ENCODE measurements at regions of chr9 and their contacts with region 1.

Region 1: DNA sequence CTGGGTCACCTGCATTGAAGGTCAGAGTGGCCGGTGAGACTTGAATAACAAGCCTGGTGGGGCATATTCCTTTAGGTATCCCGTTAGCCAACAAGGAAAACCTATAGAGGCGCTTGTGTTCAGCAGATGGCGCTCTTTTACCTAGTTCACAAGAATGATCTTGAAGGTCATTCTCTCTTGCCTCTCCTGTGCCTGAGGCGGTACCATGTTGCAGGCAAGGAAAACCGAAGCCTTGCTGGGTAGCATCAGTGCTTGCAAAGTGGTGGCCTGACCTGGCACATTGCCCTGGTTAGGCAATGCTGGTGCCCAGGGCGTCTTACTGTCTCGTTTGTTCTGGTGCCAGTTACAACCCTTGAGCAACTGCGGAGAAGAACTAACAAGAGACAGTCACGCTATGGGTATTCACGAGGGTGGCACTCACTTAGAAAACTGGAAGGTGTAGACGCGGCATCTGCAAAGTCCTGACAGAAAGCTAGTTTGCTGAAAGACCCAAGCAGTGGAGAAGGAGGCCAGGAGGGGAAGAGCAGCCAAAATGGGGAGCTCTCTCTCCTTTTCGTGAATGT is 56.7 kb downstream of the AOPEP start:
- DNase-seq: peak; percentile 98 to 99
- H3K4me3 ChIP-seq: no peak overlapping the region
- H3K27ac ChIP-seq: peak overlapping the region; percentile 78
- H3K4me1 ChIP-seq: peaks cover 30% of the 10 kb centered on the region
- H3K27me3 ChIP-seq: no peaks in the 10 kb centered on the region
- CTCF ChIP-seq: peak; percentile 84

Region 2: GRCh38 chr9:94554439-94555391 is 228.5 kb before region 1 on chr9 and contains the start of gene PCAT7:
- CTCF ChIA-PET with region 1: no interaction called
- POLR2A ChIA-PET with region 1: interaction called, 4 read pairs
- intact Hi-C with region 1: loop called (anchors 1 kb)
- DNase-seq: peak; percentile 78 to 87
- H3K4me3 ChIP-seq: peak within 1 kb of the TSS; percentile 67
- H3K27ac ChIP-seq: peak within 1 kb of the TSS; percentile 82
- H3K4me1 ChIP-seq: peaks cover 5% of the 10 kb centered on the region
- H3K27me3 ChIP-seq: no peaks in the 10 kb centered on the region
- CTCF ChIP-seq: peak; percentile 82
- total RNA-seq, gene PCAT7: 3.8 and 3.9 TPM in 2 replicates

Region 3: DNA sequence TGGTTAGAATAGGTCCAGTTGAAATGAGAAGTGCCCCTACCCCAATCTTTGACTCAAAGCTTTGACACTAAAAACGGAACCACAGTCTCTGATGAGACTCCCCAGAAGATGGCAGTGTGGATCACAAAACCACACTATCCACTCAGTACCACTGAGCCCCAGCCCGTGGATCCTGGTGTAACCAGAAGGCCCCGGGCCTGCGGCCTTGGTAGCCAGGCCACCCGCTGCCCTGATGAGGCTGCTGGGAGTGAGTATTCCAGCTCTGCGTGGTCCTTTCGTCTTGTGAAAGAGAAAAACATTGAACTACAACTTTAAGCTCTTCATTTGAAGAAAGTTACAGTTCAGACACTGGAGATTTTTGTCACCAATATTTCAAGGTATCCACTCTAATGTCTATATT is 101.7 kb before region 1 on chr9:
- CTCF ChIA-PET with region 1: interaction called, 7 read pairs
- POLR2A ChIA-PET with region 1: no interaction called
- intact Hi-C with region 1: loop called (anchors 1 kb)
- DNase-seq: peak; percentile 51 to 59
- H3K4me3 ChIP-seq: no peak overlapping the region
- H3K27ac ChIP-seq: no peak overlapping the region
- H3K4me1 ChIP-seq: 0 out of 2 replicates have a peak, but pooled peaks cover 6% of the 10 kb centered on the region
- H3K27me3 ChIP-seq: no peaks in the 10 kb centered on the region
- CTCF ChIP-seq: peak; percentile 74

Region 4: GRCh38 chr9:94697972-94698581 is 85.1 kb before region 1 on chr9:
- CTCF ChIA-PET with region 1: no interaction called
- POLR2A ChIA-PET with region 1: no interaction called
- intact Hi-C with region 1: no loop called
- DNase-seq: peak in 1 of 2 experiments; percentile 57
- H3K4me3 ChIP-seq: no peak overlapping the region
- H3K27ac ChIP-seq: no peak overlapping the region
- H3K4me1 ChIP-seq: no peaks in the 10 kb centered on the region; the same call in 1 of the 2 replicates
- H3K27me3 ChIP-seq: no peaks in the 10 kb centered on the region
- CTCF ChIP-seq: no peak

Region 5: GRCh38 chr9:94821098-94821887 is 38.1 kb after region 1 on chr9:
- CTCF ChIA-PET with region 1: no interaction called
- POLR2A ChIA-PET with region 1: no interaction called
- intact Hi-C with region 1: loop called (anchors 1 kb)
- DNase-seq: no peak
- H3K4me3 ChIP-seq: no peak overlapping the region
- H3K27ac ChIP-seq: peak overlapping the region; percentile 96; the same call in 1 of the 2 replicates
- H3K4me1 ChIP-seq: peaks cover 64% of the 10 kb centered on the region
- H3K27me3 ChIP-seq: no peaks in the 10 kb centered on the region
- CTCF ChIP-seq: no peak

Region 6: DNA sequence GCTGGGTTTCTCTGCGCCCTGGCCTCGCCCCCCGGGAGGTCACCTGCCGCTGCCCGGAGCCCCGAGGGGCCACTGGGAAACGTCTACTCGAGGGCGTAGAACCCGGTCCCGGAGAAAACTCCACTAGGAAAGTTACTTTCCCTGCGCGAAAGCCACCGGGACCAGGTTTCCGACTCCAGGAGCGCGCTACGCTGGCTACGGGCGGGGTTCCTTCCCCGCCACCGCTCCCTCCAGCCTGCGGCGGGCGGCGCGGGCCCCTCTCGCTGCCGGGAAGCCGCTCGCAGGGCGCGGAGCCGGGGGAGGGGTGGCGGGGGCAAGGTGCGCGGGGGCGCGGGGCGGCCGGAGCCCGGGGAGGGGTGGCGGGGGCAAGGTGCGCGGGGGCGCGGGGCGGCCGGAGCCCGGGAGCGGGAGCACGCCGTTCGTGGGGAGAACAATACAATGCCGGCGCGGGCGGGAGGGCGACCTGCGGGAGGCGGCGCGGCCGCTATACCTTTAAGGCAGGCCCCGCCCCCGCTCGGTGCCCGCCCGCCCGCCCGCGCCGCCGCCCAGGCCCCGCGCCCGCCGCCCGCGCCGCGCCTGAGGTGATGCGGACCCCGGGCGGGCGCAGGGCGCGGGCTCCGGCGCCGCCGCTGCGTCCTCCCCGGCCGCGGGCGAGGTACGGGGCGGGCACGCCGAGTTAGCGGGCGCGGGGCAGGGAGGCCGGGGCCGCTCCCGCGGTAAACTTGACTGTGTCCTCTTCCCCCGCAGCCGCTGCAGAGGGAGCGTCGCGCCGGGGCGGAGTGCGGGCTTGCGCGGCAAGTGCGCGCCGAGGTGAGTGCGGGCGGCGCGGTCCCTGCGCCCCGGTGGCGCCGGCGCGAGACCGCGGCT is 221.5 kb after region 1 on chr9:
- CTCF ChIA-PET with region 1: no interaction called
- POLR2A ChIA-PET with region 1: no interaction called
- intact Hi-C with region 1: loop called (anchors 1 kb)
- DNase-seq: peak in 1 of 2 experiments; percentile 65
- H3K4me3 ChIP-seq: peak overlapping the region; percentile 91
- H3K27ac ChIP-seq: peak overlapping the region; percentile 90
- H3K4me1 ChIP-seq: peaks cover 46% of the 10 kb centered on the region
- H3K27me3 ChIP-seq: no peaks in the 10 kb centered on the region
- CTCF ChIP-seq: no peak

Region 7: GRCh38 chr9:95092262-95093072 is 309.3 kb after region 1 on chr9:
- CTCF ChIA-PET with region 1: no interaction called
- POLR2A ChIA-PET with region 1: no interaction called
- intact Hi-C with region 1: loop called (anchors 1 kb)
- DNase-seq: peak; percentile 87 to 96
- H3K4me3 ChIP-seq: no peak overlapping the region
- H3K27ac ChIP-seq: peak overlapping the region; percentile 88
- H3K4me1 ChIP-seq: peaks cover 47% of the 10 kb centered on the region
- H3K27me3 ChIP-seq: no peaks in the 10 kb centered on the region
- CTCF ChIP-seq: no peak